Lower lobe of right lung (tissue), 2 donors: ENCODE measurements at regions of chr6 and their contacts with region 1.

Region 1: DNA sequence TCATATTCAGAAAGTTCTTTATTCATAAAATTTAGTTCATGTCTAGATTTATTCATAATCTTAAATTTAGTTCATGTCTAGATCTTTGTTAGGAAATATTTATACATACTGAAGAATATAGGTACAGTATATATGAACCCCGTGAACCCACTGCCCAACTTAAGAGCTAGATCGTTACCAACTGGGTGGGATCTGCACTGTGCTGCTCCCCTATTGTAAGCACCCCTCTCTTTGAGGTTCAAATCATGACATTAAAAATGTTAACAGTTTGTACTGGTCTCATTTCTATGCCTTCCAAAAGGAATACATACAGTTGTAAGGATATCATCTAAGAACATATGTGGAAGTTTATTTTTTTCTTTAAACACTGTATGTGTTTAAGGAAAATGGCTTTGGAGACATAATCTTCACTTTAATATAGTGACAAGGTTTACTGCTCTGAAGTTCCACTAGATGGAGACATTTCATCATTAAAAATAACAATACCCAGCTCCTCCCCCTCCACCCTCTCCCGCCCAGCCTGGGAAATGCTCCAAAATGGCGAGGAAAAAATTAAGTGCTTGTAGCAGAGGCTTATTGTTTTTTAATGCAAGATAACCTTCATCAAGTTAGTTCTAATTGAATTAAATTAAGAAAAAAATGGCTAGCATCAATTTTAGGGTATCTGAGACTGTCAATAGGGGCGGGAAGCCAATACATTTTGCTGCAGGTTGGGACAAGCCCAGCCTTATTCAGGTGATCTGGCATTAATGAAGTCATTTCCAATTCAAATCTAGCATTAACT is 104.1 kb upstream of the TRAF3IP2 start:
- DNase-seq: no peak
- ATAC-seq: peak; percentile 87 to 89
- H3K4me3 ChIP-seq: peak overlapping the region; percentile 25
- H3K27ac ChIP-seq: peak overlapping the region; percentile 33
- H3K4me1 ChIP-seq: peaks cover 35% of the 10 kb centered on the region
- H3K27me3 ChIP-seq: no peaks in the 10 kb centered on the region
- CTCF ChIP-seq: peak; percentile 69

Region 2: GRCh38 chr6:111997078-111997852 is 287.5 kb after region 1 on chr6:
- intact Hi-C with region 1: loop called (anchors 5 kb)
- DNase-seq: peak; percentile 83
- ATAC-seq: peak; percentile 93 to 95
- H3K4me3 ChIP-seq: peak overlapping the region; percentile 8
- H3K27ac ChIP-seq: no peak overlapping the region
- H3K4me1 ChIP-seq: peaks cover 6% of the 10 kb centered on the region
- H3K27me3 ChIP-seq: no peaks in the 10 kb centered on the region
- CTCF ChIP-seq: peak; percentile 95